ENCODE measurements at regions of chr10 and their contacts with region 1.

Region 1: GRCh38 chr10:101272229-101272868 is 43.1 kb upstream of the LBX1 start:
- DNase-seq: no peak
- H3K4me3 ChIP-seq: no peak overlapping the region
- CTCF ChIP-seq: peak; percentile 82

Region 2: DNA sequence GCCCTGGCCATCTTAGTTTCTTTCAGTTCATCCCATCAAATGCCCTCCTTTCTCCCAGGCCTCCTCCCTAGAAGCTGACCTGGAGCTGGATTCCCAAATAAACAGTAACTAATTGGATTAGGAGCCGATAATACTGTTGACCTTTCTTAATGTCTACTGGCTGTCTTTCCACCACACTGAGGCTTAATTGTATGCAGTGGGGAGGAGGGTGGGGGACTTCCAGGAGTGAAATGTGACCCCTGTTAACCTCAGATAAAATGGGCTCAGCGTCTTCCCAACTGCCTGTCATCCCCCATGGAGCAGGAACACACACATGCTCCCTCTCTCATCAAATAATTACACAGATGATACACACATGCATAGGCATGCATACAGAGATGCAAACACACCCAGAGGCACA is 10.6 kb after region 1 on chr10:
- CTCF ChIA-PET with region 1: interaction called, 72 read pairs
- POLR2A ChIA-PET with region 1: no interaction called
- DNase-seq: no peak
- H3K4me3 ChIP-seq: no peak overlapping the region
- CTCF ChIP-seq: no peak

Region 3: DNA sequence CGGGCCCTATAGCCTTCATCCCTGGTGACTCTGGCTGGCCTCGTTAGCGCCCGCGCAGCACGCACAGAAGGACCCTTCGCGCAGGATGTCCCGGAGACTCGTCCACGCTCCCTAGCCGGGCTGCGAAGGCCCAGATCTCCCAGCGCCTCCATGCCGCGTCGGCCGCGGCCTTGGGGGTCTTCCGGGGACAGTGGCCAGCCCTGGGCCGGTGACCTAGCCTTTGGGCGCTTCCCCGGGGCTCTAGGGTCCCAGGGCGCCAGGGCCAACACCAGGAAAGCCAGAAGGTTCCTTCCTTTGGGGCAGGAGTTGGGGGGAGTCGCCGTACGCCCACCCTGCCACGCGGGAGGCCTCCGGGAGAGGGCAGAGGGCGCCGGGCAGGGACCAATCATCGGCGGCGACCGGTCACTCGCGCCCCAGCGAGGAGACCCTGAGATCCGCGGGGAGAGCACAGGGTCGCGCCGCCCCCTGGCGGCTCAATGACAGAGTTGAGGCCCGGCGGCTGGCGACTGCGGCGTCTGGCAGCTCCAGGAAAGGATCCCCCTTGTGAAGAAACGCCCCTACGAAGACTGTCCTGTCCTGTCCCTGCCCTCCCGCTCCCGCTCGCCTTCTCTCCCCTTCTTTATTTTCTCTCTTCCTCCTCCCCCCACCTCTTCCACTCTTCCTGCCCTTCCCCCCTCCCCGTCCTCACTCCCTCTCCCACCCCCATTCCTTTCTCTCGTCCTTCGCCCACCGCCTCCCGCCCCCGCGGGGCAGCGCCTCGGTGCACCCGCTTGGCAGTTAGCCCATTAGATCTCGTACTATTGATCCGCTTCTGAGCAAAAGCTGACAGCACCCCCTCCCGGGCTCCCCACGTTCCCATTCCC is 19.2 kb after region 1 on chr10:
- CTCF ChIA-PET with region 1: interaction called, 72 read pairs
- POLR2A ChIA-PET with region 1: no interaction called
- DNase-seq: no peak
- H3K4me3 ChIP-seq: peak overlapping the region; percentile 50
- CTCF ChIP-seq: peak; percentile 68

Measured in AG04449 (cell line).